GM12878 (cell line): ENCODE measurements at regions of chr3 and their contacts with region 1.

Region 1: DNA sequence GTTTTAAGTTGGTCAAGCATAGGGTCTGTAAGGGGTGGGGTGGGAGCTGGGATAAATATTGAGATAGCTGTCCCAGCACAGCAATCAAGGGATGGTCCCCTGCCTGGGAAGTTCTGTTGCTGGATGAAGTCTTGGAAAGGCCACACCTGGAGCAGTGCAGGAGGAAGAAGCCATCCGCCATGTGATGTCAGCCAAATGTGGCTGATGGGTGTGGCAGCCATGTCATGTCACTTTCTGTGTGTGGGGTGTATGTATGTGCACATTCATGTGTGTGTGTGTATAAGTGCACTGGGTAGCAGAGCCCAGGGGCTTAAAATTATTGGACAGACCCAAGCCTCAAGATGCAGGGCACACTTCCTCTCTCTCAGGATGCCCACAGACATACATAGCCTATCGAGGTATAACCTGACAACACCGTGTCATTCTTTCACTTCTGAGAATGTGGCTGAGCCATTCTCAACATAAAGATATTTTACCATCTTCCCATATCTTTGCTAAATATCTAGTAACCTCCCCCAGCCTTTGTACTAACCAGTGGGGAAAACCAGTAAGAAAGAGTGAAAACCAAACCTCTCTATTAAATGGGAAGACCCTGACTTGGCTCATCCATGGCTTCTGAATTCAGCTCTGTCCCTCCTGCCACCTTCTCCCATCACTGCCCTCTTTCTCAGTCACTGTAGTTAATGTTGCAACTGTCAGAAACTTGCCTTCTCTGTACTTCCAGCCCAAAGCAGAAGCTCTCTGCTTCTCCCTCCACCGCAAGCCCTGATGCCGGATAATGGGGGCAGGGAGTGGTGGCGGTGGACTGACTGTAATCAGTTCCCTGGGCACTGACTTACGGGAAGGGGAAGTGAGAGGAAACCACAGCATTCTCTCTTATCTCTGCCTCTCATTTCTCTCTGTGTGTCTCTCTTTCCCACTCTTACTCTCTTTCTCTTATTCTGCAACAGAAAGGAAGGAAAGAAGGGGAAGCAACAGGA is 11.2 kb downstream of the TNFSF10 start:
- DNase-seq: peak; percentile 55
- ATAC-seq: peak; percentile 84
- H3K4me3 ChIP-seq: no peak overlapping the region
- H3K27ac ChIP-seq: peak overlapping the region; percentile 27
- H3K4me1 ChIP-seq: peaks cover 19% of the 10 kb centered on the region
- H3K27me3 ChIP-seq: no peaks in the 10 kb centered on the region
- CTCF ChIP-seq: no peak
- EP300 ChIP-seq: peak in 1 of 2 experiments; percentile 54; a peak in 1 of 4 replicates
- POLR2A ChIP-seq: no peak
- RAD21 ChIP-seq: no peak

Region 2: DNA sequence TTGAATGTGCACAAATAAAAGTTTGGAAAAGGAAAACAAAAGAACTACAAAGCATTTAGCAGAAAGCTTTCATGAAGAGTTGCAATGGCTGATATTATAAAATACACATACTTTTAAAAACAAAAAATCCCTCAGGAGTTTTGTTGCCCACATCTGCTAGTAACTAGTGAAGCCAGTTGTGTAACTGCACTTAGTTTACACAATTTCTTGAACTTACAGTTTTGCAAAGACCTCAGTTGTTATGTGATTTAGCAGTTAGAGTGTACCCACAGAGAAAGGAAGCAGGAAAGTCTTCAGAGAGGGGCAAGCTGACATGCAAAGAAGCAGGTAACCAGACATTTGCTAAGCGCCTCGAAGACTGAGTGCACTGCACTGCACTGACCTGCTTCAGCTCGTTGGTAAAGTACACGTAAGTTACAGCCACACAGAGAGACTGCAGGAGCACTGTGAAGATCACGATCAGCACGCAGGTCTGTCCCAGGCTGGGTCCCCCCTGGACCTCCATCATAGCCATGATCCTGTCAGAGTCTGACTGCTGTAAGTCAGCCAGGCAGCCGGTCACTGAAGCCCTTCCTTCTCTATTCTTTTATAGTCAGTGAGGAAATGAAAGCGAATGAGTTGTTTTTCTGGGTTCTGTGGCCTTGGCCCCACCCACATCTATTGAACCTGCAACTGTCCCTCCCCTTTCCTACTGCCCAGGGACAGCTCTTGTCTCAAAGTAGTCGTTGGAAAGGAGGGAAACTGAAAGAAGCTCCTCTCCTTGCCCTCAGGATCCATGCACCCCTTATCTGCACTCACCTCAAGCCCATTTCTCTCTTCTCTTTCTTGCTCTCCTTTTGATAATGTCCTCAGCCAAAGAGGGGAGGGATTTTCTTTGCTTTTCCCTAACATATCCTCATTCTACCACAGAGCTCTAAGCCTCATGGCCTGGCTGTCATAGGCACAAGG is 11.1 kb after region 1 on chr3 and contains the start of gene TNFSF10:
- CTCF ChIA-PET with region 1: interaction called, 3 read pairs
- POLR2A ChIA-PET with region 1: interaction called, 4 read pairs
- RAD21 ChIA-PET with region 1: interaction called, 3 read pairs
- SMC1A ChIA-PET with region 1: interaction called, 16 read pairs
- in situ Hi-C with region 1: no loop called
- intact Hi-C with region 1: no loop called
- DNase-seq: peak; percentile 76
- ATAC-seq: peak; percentile 92
- H3K4me3 ChIP-seq: peak within 1 kb of the TSS; percentile 57
- H3K27ac ChIP-seq: peak within 1 kb of the TSS; percentile 74
- H3K4me1 ChIP-seq: peaks cover 10% of the 10 kb centered on the region; the same call in 1 of the 2 replicates
- H3K27me3 ChIP-seq: no peaks in the 10 kb centered on the region
- CTCF ChIP-seq: no peak
- EP300 ChIP-seq: no peak
- POLR2A ChIP-seq: peak; percentile 89
- RAD21 ChIP-seq: no peak
- polyA plus RNA-seq, gene TNFSF10: 4.1 to 4.6 TPM

Region 3: GRCh38 chr3:172939651-172940293 is 427.7 kb after region 1 on chr3:
- CTCF ChIA-PET with region 1: no interaction called
- POLR2A ChIA-PET with region 1: no interaction called
- RAD21 ChIA-PET with region 1: no interaction called
- SMC1A ChIA-PET with region 1: no interaction called
- in situ Hi-C with region 1: no loop called
- intact Hi-C with region 1: no loop called
- DNase-seq: no peak
- ATAC-seq: no peak
- H3K4me3 ChIP-seq: no peak overlapping the region
- H3K27ac ChIP-seq: no peak overlapping the region
- H3K4me1 ChIP-seq: no peaks in the 10 kb centered on the region
- H3K27me3 ChIP-seq: no peaks in the 10 kb centered on the region
- CTCF ChIP-seq: no peak
- EP300 ChIP-seq: no peak
- POLR2A ChIP-seq: no peak
- RAD21 ChIP-seq: no peak